ENCODE measurements at regions of chr1 and their contacts with region 1.

Region 1: DNA sequence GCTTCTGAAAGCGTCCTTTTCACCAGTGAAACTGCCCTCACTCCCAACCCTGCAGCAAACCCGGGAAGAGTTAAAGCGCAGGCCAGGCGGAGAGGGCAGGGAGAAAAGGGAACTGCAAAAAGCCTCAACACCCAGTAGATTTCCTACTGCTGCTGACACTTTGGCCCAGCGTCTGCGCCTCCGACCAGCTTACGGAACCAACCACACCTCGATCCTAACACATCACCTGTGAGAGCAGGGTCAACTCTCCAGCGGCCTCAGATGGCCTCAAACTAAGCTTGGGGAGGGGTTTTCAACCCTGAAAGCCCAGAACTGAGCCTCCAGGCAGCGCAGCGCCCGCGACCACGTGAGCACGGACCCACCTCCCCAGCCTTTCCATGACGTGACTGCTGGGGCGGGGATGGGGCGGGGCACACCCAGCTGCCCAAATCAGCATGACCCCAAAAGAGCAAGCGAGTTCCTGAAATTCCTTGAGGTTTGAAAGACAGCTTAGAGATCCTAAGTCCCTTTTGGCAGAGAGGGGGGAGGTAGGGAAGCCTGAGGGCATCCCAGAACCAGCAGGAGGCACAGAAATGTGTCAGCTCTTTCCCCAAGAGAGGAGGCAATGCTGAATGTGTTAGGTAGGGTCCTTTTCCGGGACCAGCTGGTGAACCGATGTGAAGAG is 59.1 kb downstream of the ITPKB start:
- DNase-seq: peak; percentile 87 to 92
- H3K4me3 ChIP-seq: peak overlapping the region; percentile 21
- H3K4me3 Mint-ChIP-seq: peak overlapping the region; percentile 75
- H3K27ac Mint-ChIP-seq: peak overlapping the region; percentile 98
- H3K4me1 ChIP-seq: peaks cover 21% of the 10 kb centered on the region
- H3K4me1 Mint-ChIP-seq: peaks cover 20% of the 10 kb centered on the region
- H3K27me3 ChIP-seq: no peaks in the 10 kb centered on the region
- H3K27me3 Mint-ChIP-seq: no peaks in the 10 kb centered on the region
- CTCF ChIP-seq: no peak

Region 2: DNA sequence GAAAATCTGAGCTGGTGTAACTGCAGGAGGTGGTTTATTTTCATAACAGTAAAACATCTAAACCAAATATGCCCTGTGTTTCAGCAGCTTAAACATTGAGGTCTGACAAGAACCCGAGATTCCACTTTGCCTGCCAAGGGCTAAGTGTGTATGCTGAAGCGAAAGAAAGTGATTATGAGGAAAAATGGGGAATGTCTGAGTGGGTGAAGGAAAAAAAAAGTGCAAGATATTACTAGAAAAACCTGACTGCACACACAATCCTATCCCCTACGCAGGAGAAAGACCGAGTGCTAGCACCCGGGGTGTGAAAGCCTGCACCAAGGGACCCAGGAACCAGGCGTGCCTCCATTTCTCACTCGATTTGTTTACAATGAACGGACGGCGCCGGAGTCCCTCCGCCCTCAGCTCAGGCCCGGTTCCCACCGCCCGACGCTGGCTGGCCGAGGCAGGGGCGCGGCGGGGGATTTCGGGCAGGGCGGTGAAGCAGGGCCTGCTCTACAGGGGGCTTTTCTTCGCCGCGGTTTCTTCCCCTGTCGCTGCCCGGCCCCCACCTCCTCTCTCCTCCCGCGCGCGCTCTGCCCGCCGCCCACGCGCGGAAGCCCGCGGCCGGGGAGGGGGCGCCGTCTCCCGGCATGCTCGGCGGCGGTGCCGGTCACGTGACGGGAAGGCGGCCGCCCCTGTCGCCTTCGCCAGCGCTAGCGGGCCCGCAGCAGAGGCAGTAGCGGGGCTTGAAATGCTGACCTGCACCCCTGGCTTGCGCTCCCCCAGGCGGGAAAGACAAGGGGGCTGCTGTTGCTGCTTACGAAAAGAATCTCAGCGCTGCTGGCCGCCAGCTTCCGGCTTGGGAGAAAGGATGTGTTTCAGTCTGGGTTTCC is 23.2 kb after region 1 on chr1:
- CTCF ChIA-PET with region 1: interaction called, 4 read pairs
- POLR2A ChIA-PET with region 1: interaction called, 4 read pairs
- intact Hi-C with region 1: loop called (anchors 2 kb)
- DNase-seq: peak; percentile 49 to 82
- H3K4me3 ChIP-seq: peak overlapping the region; percentile 69
- H3K4me3 Mint-ChIP-seq: peak overlapping the region; percentile 83
- H3K27ac Mint-ChIP-seq: peak overlapping the region; percentile 72
- H3K4me1 ChIP-seq: peaks cover 5% of the 10 kb centered on the region; the same call in 1 of the 2 replicates
- H3K4me1 Mint-ChIP-seq: no peaks in the 10 kb centered on the region
- H3K27me3 ChIP-seq: no peaks in the 10 kb centered on the region
- H3K27me3 Mint-ChIP-seq: no peaks in the 10 kb centered on the region
- CTCF ChIP-seq: no peak